ENCODE measurements at regions of chr20 and their contacts with region 1.

Region 1: GRCh38 chr20:32521780-32522525 is 63.2 kb downstream of the NOL4L start:
- DNase-seq: peak; percentile 65 to 86 (median 76)
- H3K4me3 ChIP-seq: peak overlapping the region in 1 of 59 donors; percentile 7
- H3K27ac ChIP-seq: peak overlapping the region in 50 of 59 donors; percentile 9 to 90 (median 62)
- H3K27me3 ChIP-seq: no peaks in the 10 kb centered on the region
- CTCF ChIP-seq: peak; percentile 47 to 94 (median 88)

Region 2: DNA sequence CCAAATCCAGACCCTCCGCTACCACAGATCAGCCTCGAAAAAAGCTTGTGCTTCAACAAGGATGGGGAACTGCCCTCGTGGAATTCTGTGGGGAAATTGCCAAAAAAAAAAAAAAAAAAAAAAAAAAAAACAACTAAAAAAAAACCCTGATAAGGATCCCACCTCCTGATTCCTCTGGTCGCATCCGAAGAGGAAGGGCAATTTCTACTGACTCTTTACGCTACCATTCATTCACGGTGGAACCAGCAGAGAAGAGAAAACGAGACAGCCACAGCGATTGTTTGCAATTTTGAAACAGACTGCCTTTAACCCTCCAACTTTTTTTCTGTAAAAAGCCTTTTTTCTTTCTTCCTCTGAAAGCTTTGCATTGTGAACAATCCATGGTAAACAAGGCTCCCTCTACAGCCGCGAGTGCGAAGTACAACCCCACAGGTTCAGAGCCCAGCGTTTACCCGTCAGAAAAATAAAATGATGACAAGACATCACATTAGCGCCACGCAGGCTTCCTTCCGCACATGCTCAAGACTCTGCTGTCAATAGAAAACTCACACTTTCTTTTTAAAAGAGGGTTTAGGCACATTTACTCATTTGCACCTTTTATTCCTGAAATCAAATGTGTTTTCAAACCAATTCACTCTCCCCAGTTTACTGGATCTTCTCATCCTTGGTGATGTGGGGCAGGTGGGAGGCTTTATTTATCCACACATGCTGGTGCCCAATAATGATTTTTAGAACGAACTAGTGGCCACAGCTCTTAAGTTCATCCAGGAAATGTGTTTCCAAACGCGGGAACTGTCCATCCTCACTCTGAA is 36.8 kb before region 1 on chr20:
- intact Hi-C with region 1: loop called in 1 of 2 experiments (anchors 5 kb)
- DNase-seq: peak; percentile 82 to 95 (median 88)
- H3K4me3 ChIP-seq: peak overlapping the region in 58 of 59 donors; percentile 42 to 92 (median 78)
- H3K27ac ChIP-seq: peak overlapping the region; percentile 58 to 99 (median 96)
- H3K27me3 ChIP-seq: no peaks in the 10 kb centered on the region
- CTCF ChIP-seq: peak; percentile 72 to 95 (median 88)

Region 3: GRCh38 chr20:32585011-32585518 is 63.1 kb after region 1 on chr20 and contains the start of gene NOL4L:
- intact Hi-C with region 1: loop called (anchors 5 kb)
- DNase-seq: peak in 4 of 10 donors; percentile 32 to 69 (median 60)
- H3K4me3 ChIP-seq: peak within 1 kb of the TSS; percentile 54 to 89 (median 76)
- H3K27ac ChIP-seq: peak within 1 kb of the TSS in 57 of 59 donors; percentile 51 to 96 (median 86)
- H3K27me3 ChIP-seq: no peaks in the 10 kb centered on the region
- CTCF ChIP-seq: no peak
- total RNA-seq, gene NOL4L: 29.4 to 56.2 (median 42.8) TPM

Region 4: GRCh38 chr20:32605167-32605656 is 83.3 kb after region 1 on chr20:
- intact Hi-C with region 1: no loop called
- DNase-seq: peak in 2 of 10 donors; percentile 36 to 58
- H3K4me3 ChIP-seq: no peak overlapping the region
- H3K27ac ChIP-seq: peak overlapping the region in 1 of 59 donors; percentile 10
- H3K27me3 ChIP-seq: no peaks in the 10 kb centered on the region
- CTCF ChIP-seq: no peak

Region 5: GRCh38 chr20:32652739-32653526 is 131.0 kb after region 1 on chr20:
- intact Hi-C with region 1: loop called (anchors 1 to 2 kb)
- DNase-seq: peak; percentile 81 to 91 (median 88)
- H3K4me3 ChIP-seq: peak overlapping the region in 3 of 59 donors; percentile 9 to 21 (median 10)
- H3K27ac ChIP-seq: peak overlapping the region in 8 of 59 donors; percentile 14 to 60 (median 39)
- H3K27me3 ChIP-seq: no peaks in the 10 kb centered on the region
- CTCF ChIP-seq: peak in 55 of 56 donors; percentile 90 to 99 (median 97)

Region 6: DNA sequence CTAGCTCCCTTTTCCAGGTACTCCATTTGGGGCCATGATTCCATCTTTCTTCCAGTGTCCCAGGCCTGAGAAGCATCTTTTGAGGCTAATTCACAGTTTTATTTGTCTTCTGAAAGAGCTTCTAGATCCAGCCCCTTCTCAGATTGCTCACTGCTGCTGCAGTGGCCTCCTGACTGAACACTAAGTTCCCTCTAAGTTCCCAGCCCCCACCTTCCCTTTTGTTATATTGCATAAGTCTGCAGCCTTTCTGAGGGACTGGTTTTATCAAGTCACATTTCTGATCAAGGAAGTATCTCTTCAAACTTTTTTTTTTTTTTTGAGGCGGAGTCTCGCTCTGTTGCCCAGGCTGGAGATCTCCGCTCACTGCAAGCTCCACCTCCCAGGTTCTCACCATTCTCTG is 308.5 kb after region 1 on chr20:
- intact Hi-C with region 1: no loop called
- DNase-seq: no peak
- H3K4me3 ChIP-seq: no peak overlapping the region
- H3K27ac ChIP-seq: peak overlapping the region in 30 of 59 donors; percentile 1 to 72 (median 43)
- H3K27me3 ChIP-seq: no peaks in the 10 kb centered on the region
- CTCF ChIP-seq: no peak

Measured in dorsolateral prefrontal cortex (tissue), 120 donors.